IMR-90 (cell line): ENCODE measurements at regions of chr7 and their contacts with region 1.

Region 1: DNA sequence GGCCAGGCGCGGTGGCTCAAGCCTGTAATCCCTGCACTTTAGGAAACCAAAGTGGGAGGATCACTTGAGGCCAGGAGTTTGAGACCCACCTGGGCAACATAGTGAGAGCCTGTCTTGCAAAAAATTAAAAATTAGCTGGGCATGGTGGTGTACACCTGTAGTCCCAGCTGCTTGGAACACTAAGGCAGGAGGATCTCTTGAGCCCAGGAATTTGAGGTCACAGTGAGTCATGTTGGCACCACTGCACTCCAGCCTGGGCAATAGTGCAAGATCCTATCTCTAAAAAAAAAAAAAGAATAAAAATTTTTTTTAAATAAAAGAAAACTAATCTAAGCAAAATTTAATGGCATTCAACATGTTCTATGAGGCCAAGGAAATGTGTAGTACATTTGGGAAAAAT is 44.9 kb upstream of the UBN2 start:
- DNase-seq: no peak
- ATAC-seq: no peak
- H3K4me3 ChIP-seq: no peak overlapping the region
- H3K27ac ChIP-seq: no peak overlapping the region
- H3K4me1 ChIP-seq: no peaks in the 10 kb centered on the region
- H3K27me3 ChIP-seq: no peaks in the 10 kb centered on the region
- CTCF ChIP-seq: no peak
- POLR2A ChIP-seq: no peak
- RAD21 ChIP-seq: no peak

Region 2: GRCh38 chr7:139095194-139095659 is 90.9 kb before region 1 on chr7:
- CTCF ChIA-PET with region 1: no interaction called
- POLR2A ChIA-PET with region 1: no interaction called
- dilution Hi-C with region 1: no loop called
- in situ Hi-C with region 1: no loop called
- intact Hi-C with region 1: no loop called
- DNase-seq: no peak
- ATAC-seq: no peak
- H3K4me3 ChIP-seq: no peak overlapping the region
- H3K27ac ChIP-seq: no peak overlapping the region
- H3K4me1 ChIP-seq: peaks cover 2% of the 10 kb centered on the region; the same call in 1 of the 2 replicates
- H3K27me3 ChIP-seq: no peaks in the 10 kb centered on the region
- CTCF ChIP-seq: no peak
- POLR2A ChIP-seq: no peak
- RAD21 ChIP-seq: no peak

Region 3: DNA sequence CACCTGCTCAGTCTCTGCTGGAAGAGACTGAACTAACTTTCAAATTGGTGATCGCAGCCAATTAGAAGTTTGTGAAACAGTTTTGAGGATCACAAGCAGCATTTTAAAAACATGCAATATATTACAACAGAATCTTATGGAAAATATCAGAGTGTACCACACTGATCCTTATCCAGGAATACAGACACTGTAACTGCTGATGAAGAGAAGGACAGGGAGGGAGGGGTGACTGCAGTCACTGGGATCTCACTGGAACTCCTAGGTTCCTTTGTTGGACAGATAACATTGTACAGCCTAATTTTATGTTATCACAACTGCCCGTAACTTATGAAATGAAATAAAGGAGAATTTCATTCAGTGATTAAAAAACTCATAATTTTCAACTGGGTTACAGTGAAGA is 38.1 kb after region 1 on chr7:
- CTCF ChIA-PET with region 1: no interaction called
- POLR2A ChIA-PET with region 1: no interaction called
- dilution Hi-C with region 1: no loop called
- in situ Hi-C with region 1: no loop called
- intact Hi-C with region 1: loop called (anchors 5 kb)
- DNase-seq: no peak
- ATAC-seq: no peak
- H3K4me3 ChIP-seq: no peak overlapping the region
- H3K27ac ChIP-seq: no peak overlapping the region
- H3K4me1 ChIP-seq: no peaks in the 10 kb centered on the region
- H3K27me3 ChIP-seq: no peaks in the 10 kb centered on the region; the same call in 1 of the 2 replicates
- CTCF ChIP-seq: no peak
- POLR2A ChIP-seq: no peak
- RAD21 ChIP-seq: no peak

Region 4: DNA sequence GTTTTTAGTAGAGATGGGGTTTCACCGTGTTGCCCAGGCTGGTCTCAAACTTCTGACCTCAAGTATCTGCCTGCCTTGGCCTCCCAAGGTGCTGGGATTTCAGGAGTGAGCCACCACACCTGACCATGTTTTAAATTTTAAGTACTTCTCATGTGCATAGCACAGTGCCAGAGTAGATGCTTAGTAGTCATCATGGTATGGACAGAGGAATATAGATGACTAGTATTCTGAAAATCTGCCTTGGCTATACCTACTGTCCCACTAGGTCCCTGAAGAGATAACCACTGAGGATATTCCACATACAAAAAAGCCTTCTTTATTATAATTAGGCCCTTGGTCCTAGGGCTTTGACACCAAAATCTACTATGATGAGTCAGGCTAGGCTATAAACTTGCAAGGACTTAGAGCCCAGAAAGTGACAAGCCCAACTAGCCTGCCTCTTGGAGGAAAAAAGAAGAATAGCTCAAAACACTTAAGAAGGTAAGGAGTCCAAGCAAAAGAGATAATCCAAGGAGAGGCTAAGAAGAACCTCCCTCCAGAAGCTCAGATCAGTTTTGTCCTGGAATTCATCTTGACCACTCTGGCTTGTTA is 207.6 kb after region 1 on chr7:
- CTCF ChIA-PET with region 1: no interaction called
- POLR2A ChIA-PET with region 1: no interaction called
- dilution Hi-C with region 1: no loop called
- in situ Hi-C with region 1: no loop called
- intact Hi-C with region 1: no loop called
- DNase-seq: no peak
- ATAC-seq: 0 out of 2 replicates have a peak, but pooled peaks have one; percentile 8
- H3K4me3 ChIP-seq: no peak overlapping the region
- H3K27ac ChIP-seq: no peak overlapping the region
- H3K4me1 ChIP-seq: peaks cover 6% of the 10 kb centered on the region; the same call in 1 of the 2 replicates
- H3K27me3 ChIP-seq: no peaks in the 10 kb centered on the region
- CTCF ChIP-seq: no peak
- POLR2A ChIP-seq: no peak
- RAD21 ChIP-seq: no peak